Ascending aorta (tissue), 2 donors: ENCODE measurements at regions of chr5 and their contacts with region 1.

Region 1: GRCh38 chr5:149434162-149435014 is 55.3 kb upstream of the IL17B start:
- DNase-seq: peak in 1 of 2 donors; percentile 89
- H3K4me3 ChIP-seq: no peak overlapping the region
- H3K27ac ChIP-seq: peak overlapping the region; percentile 80 to 88
- H3K4me1 ChIP-seq: peaks cover 0 to 3% of the 10 kb centered on the region in 2 donors
- H3K27me3 ChIP-seq: no peaks in the 10 kb centered on the region
- CTCF ChIP-seq: peak; percentile 60 to 83 (median 80)

Region 2: GRCh38 chr5:149367249-149367971 is 67.0 kb before region 1 on chr5:
- intact Hi-C with region 1: loop called (anchors 2 kb)
- DNase-seq: peak in 1 of 2 donors; percentile 86
- H3K4me3 ChIP-seq: peak overlapping the region in 1 of 2 donors; percentile 32
- H3K27ac ChIP-seq: peak overlapping the region; percentile 55 to 62
- H3K4me1 ChIP-seq: peaks cover 5 to 18% of the 10 kb centered on the region in 2 donors
- H3K27me3 ChIP-seq: no peaks in the 10 kb centered on the region
- CTCF ChIP-seq: peak; percentile 85 to 87 (median 85)

Region 3: DNA sequence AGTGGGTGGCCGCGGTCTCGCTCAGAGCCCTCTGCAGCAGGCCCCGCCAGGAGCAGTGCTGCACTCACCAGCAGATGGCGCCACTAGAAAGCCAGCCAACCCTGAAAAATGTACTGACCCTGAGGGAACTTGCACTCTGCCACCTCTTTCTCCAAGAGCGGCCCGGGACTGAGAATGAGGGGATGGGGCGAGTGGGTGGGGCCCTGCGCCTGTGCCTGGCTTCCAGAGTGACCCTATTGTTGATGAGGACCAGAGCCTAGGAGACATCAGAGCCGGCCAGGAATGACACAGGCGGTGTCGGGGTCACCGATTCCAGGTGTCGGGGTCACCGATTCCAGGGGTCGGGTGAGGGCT is 52.4 kb before region 1 on chr5:
- intact Hi-C with region 1: loop called (anchors 1 kb)
- DNase-seq: peak in 1 of 2 donors; percentile 93
- H3K4me3 ChIP-seq: peak overlapping the region in 1 of 2 donors; percentile 55
- H3K27ac ChIP-seq: peak overlapping the region; percentile 93 to 98
- H3K4me1 ChIP-seq: peaks cover 37 to 80% of the 10 kb centered on the region in 2 donors
- H3K27me3 ChIP-seq: no peaks in the 10 kb centered on the region
- CTCF ChIP-seq: peak; percentile 93 to 98 (median 93)

Region 4: DNA sequence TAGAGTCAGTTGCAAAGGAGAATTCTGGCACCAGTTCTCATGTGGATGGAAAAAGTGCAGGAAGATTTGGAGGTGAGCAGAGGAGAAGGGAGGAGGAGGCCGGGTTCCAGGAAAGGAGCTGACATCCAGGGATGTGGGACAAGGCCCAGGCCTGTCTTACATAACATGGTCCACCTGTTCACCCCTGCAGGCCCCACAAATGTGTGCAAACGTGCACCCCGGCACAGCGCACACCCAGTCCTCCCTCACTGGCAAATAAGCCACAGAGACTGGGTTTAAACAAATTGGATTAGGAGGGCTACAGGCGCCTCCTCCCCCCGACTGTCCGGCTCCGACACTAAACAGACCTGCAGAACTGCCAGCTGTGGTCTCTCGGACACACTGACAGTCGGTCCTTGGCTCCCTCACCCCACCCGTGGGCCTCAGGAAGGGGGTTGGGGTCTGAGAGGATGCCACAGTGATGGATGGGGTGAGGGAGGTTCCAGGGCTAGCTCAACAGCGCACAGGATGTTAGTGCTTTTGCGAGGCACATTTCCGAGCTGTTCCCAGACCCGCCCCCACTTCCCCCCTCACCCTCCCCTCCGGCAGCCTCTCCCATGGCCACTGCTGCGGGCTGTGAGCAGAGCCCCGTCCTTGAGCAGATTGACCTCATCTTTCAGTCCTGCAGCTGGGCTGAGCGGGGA is 11.9 kb before region 1 on chr5:
- intact Hi-C with region 1: loop called (anchors 1 kb)
- DNase-seq: peak in 1 of 2 donors; percentile 76
- H3K4me3 ChIP-seq: peak overlapping the region in 1 of 2 donors; percentile 87
- H3K27ac ChIP-seq: peak overlapping the region; percentile 88 to 90
- H3K4me1 ChIP-seq: peaks cover 25 to 68% of the 10 kb centered on the region in 2 donors
- H3K27me3 ChIP-seq: no peaks in the 10 kb centered on the region
- CTCF ChIP-seq: no peak